ENCODE measurements at regions of chr20 and their contacts with region 1.

Region 1: DNA sequence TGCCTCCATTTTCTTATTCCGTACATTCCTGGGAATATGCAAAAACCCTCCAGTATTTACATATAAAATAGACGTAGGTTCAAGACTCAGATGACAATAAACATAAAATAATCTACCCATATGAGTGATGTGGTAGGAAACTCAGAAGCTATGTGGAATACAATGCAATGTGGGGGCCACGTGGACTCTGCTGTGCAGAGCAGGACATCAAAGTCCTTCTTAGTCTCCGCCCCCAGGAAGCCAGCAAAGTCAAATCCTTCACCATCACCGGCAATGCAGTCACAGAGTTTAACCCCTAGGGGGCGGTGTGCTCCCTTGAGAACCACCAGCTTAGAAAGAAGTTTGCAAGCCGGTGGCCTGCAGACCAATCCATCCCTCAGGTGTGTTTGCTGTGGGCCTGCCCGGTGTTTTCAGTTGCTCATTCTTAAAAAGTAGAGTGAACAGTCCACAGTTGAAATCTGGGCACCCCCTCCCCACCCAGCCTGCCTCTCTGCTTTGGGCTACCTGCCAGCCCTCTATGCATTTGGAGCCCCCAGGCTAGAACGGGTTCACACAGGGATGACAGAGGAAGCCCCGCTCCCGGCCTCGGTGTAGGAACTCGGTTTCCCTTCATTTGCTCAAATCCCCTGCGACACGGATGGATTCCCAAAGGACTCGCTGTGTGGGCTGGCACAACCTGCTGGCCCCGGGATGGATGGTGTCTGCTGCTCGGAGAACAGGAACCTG is 59.9 kb downstream of the SULF2 start:
- DNase-seq: peak; percentile 84 to 85 (median 85)
- H3K4me3 ChIP-seq: no peak overlapping the region
- H3K4me3 Mint-ChIP-seq: no peak overlapping the region
- H3K27ac ChIP-seq: no peak overlapping the region
- H3K27ac Mint-ChIP-seq: peak overlapping the region in 5 of 7 donors; percentile 32 to 100 (median 100)
- H3K4me1 ChIP-seq: peaks cover 51 to 59% of the 10 kb centered on the region in 2 donors
- H3K4me1 Mint-ChIP-seq: peaks cover 63% of the 10 kb centered on the region
- H3K27me3 ChIP-seq: no peaks in the 10 kb centered on the region
- H3K27me3 Mint-ChIP-seq: peaks cover 0 to 3% (median 0%) of the 10 kb centered on the region in 3 donors
- CTCF ChIP-seq: peak; percentile 92

Region 2: DNA sequence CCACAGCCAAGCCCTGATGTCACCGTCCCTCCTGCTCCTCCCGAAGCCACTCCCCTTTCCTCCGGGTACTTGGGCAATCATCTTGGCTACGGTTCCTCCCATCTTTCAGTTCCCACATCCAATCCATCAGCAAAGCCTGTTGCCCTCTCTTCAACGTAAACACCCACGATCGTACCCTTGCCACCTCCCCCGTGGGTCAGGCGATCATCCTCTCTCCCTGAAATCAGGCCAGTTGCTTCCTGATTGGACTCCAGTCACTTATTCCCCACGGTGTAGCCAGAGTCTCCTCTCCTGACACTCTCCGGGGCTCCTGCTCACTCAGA is 15.4 kb after region 1 on chr20:
- intact Hi-C with region 1: loop called in 1 of 2 experiments (anchors 2 kb)
- DNase-seq: peak; percentile 97 to 99 (median 98)
- H3K4me3 ChIP-seq: peak overlapping the region in 1 of 3 experiments; percentile 48
- H3K4me3 Mint-ChIP-seq: peak overlapping the region; percentile 64 to 76
- H3K27ac ChIP-seq: peak overlapping the region; percentile 92 to 94
- H3K27ac Mint-ChIP-seq: peak overlapping the region; percentile 98 to 99 (median 99)
- H3K4me1 ChIP-seq: peaks cover 58 to 79% of the 10 kb centered on the region in 2 donors
- H3K4me1 Mint-ChIP-seq: peaks cover 80% of the 10 kb centered on the region
- H3K27me3 ChIP-seq: no peaks in the 10 kb centered on the region
- H3K27me3 Mint-ChIP-seq: no peaks in the 10 kb centered on the region
- CTCF ChIP-seq: no peak

Region 3: DNA sequence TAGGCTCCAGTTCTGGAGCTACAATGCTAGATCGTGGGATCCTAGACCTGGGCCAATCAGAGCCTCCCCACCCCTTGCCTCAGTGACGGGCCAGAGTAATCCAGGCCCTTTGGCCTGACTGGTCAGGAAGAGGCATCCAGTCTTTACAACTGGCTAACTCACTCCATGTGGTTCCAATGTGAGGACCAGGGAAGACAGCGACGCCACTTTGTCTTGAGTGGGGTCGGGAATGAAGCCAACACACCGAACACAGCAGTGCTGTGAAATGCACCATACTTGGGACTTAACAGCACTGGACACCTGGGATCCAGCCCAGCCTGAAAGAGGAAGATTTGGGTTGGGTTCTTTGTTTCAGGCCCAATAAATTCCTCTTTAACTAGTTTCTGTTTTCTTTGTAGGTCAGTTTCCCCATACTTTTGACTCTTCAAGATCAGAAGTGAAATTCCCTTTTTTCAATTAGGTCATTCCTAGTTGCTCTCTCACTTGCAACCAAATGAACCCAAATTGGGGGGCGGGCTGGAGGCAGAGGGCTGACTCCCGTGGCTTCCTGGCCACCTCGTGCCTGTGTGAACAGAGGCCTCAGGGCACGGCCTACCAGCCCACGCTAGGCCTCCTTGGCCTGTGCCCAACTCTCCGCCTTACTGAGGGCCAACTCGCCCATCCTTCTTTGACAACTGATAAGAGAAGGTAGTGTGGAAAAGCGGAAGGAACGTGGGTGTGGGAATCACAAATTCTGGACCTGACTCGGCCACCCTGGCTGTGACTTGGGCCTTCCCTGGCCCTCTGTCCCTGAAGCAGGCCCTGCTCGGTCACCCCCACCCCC is 42.8 kb after region 1 on chr20:
- intact Hi-C with region 1: loop called (anchors 2 to 5 kb)
- DNase-seq: peak; percentile 72 to 85 (median 77)
- H3K4me3 ChIP-seq: peak overlapping the region in 1 of 3 experiments; percentile 35
- H3K4me3 Mint-ChIP-seq: peak overlapping the region in 1 of 2 donors; percentile 48
- H3K27ac ChIP-seq: peak overlapping the region; percentile 88
- H3K27ac Mint-ChIP-seq: peak overlapping the region; percentile 93 to 97 (median 95)
- H3K4me1 ChIP-seq: peaks cover 98 to 100% of the 10 kb centered on the region in 2 donors
- H3K4me1 Mint-ChIP-seq: peaks cover 99% of the 10 kb centered on the region
- H3K27me3 ChIP-seq: no peaks in the 10 kb centered on the region
- H3K27me3 Mint-ChIP-seq: peaks cover 0 to 10% (median 0%) of the 10 kb centered on the region in 3 donors
- CTCF ChIP-seq: no peak

Region 4: GRCh38 chr20:47785854-47786764 is 60.7 kb after region 1 on chr20:
- intact Hi-C with region 1: loop called (anchors 2 to 5 kb)
- DNase-seq: peak; percentile 60 to 70 (median 63)
- H3K4me3 ChIP-seq: peak overlapping the region; percentile 49 to 85 (median 51)
- H3K4me3 Mint-ChIP-seq: peak overlapping the region; percentile 95 to 99
- H3K27ac ChIP-seq: peak overlapping the region; percentile 57 to 84
- H3K27ac Mint-ChIP-seq: peak overlapping the region; percentile 91 to 97 (median 95)
- H3K4me1 ChIP-seq: peaks cover 41 to 47% of the 10 kb centered on the region in 2 donors
- H3K4me1 Mint-ChIP-seq: peaks cover 45% of the 10 kb centered on the region
- H3K27me3 ChIP-seq: peaks cover 0 to 11% of the 10 kb centered on the region in 2 donors
- H3K27me3 Mint-ChIP-seq: peaks cover 14 to 25% (median 23%) of the 10 kb centered on the region in 3 donors
- CTCF ChIP-seq: peak; percentile 57

Region 5: GRCh38 chr20:48620519-48621254 is 895.3 kb after region 1 on chr20:
- intact Hi-C with region 1: loop called in 1 of 2 experiments (anchors 2 kb)
- DNase-seq: peak; percentile 50 to 68 (median 65)
- H3K4me3 ChIP-seq: peak overlapping the region in 1 of 3 experiments; percentile 38
- H3K4me3 Mint-ChIP-seq: peak overlapping the region; percentile 14 to 73
- H3K27ac ChIP-seq: peak overlapping the region in 1 of 2 donors; percentile 32
- H3K27ac Mint-ChIP-seq: peak overlapping the region in 6 of 7 donors; percentile 11 to 83 (median 64)
- H3K4me1 ChIP-seq: peaks cover 14 to 15% of the 10 kb centered on the region in 2 donors
- H3K4me1 Mint-ChIP-seq: peaks cover 21% of the 10 kb centered on the region
- H3K27me3 ChIP-seq: no peaks in the 10 kb centered on the region
- H3K27me3 Mint-ChIP-seq: peaks cover 6 to 15% (median 8%) of the 10 kb centered on the region in 3 donors
- CTCF ChIP-seq: peak; percentile 99

Measured in CD14-positive monocyte (primary cell).